ENCODE measurements at regions of chr9 and their contacts with region 1.

Region 1: GRCh38 chr9:73667717-73668116 is 516.1 kb downstream of the ANXA1 start:
- DNase-seq: no peak
- ATAC-seq: no peak
- H3K4me3 ChIP-seq: no peak overlapping the region
- H3K27ac ChIP-seq: no peak overlapping the region
- H3K4me1 ChIP-seq: no peaks in the 10 kb centered on the region
- H3K27me3 ChIP-seq: no peaks in the 10 kb centered on the region
- CTCF ChIP-seq: no peak
- POLR2A ChIP-seq: no peak

Region 2: GRCh38 chr9:73613092-73613701 is 54.5 kb before region 1 on chr9:
- intact Hi-C with region 1: loop called in 1 of 10 experiments (anchors 2 kb)
- DNase-seq: no peak
- ATAC-seq: no peak
- H3K4me3 ChIP-seq: no peak overlapping the region
- H3K27ac ChIP-seq: no peak overlapping the region
- H3K4me1 ChIP-seq: no peaks in the 10 kb centered on the region
- H3K27me3 ChIP-seq: no peaks in the 10 kb centered on the region
- CTCF ChIP-seq: no peak
- POLR2A ChIP-seq: no peak

Region 3: GRCh38 chr9:73780916-73781315 is 113.2 kb after region 1 on chr9:
- intact Hi-C with region 1: loop called in 1 of 10 experiments (anchors 5 kb)
- DNase-seq: no peak
- ATAC-seq: no peak
- H3K4me3 ChIP-seq: no peak overlapping the region
- H3K27ac ChIP-seq: no peak overlapping the region
- H3K4me1 ChIP-seq: no peaks in the 10 kb centered on the region
- H3K27me3 ChIP-seq: no peaks in the 10 kb centered on the region
- CTCF ChIP-seq: no peak
- POLR2A ChIP-seq: no peak